Activated CD8-positive, alpha-beta T cell treated with anti-CD3 and anti-CD28 coated beads, Interleukin-2, amount 10 ng/mL, durations not matched to agents 7 days and 5 days (primary cell): ENCODE measurements at regions of chr6 and their contacts with region 1.

Region 1: DNA sequence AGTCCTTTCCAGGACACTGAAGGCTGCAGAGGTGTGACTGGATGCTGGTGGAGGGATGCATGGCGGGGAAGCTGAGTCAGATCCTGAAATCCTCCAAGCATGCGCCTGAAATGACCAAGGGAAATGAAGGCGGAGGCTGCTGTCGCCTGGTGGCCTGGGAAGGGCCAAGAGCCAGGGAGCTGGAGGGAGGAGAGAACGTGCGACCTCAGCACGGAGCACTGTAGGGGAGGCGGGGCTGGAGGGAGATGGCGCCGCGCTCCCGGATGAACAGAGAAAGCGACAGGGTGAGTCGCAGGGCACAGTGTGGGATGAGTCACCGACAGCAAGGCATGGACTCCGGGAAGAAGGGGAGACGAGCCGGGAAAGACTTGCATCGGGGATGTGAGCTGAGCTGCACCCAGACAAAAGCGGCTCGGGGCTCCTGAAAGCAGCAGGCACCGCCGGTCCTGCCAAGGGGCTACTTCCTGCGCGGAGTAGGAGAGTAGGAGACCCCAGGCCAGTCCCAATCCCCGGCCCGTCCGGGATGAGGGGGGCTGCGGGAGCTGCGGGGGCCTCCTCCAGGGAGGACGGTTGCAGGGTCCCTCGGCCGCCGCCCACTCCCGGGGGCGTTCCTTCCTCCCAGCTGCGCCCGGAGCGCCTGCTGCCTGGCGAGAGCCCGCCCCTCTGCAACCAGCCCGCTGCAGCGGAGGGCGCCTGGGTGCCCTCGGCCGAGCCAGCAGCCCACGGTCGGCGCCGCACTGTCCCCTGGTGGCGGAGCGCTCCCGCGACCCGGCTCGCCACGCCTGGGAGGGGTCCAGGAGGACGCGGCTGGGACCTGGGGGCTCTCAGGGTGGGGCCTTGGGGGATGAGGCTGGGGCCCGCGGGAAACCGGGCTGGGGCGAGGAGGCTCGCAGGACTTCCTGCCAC is 11.0 kb upstream of the NQO2 start:
- DNase-seq: peak; percentile 83
- ATAC-seq: peak; percentile 79
- H3K4me3 Mint-ChIP-seq: peak overlapping the region; percentile 87
- H3K27ac Mint-ChIP-seq: peak overlapping the region; percentile 96
- H3K4me1 Mint-ChIP-seq: peaks cover 25% of the 10 kb centered on the region
- H3K27me3 Mint-ChIP-seq: peaks cover 4% of the 10 kb centered on the region

Region 2: DNA sequence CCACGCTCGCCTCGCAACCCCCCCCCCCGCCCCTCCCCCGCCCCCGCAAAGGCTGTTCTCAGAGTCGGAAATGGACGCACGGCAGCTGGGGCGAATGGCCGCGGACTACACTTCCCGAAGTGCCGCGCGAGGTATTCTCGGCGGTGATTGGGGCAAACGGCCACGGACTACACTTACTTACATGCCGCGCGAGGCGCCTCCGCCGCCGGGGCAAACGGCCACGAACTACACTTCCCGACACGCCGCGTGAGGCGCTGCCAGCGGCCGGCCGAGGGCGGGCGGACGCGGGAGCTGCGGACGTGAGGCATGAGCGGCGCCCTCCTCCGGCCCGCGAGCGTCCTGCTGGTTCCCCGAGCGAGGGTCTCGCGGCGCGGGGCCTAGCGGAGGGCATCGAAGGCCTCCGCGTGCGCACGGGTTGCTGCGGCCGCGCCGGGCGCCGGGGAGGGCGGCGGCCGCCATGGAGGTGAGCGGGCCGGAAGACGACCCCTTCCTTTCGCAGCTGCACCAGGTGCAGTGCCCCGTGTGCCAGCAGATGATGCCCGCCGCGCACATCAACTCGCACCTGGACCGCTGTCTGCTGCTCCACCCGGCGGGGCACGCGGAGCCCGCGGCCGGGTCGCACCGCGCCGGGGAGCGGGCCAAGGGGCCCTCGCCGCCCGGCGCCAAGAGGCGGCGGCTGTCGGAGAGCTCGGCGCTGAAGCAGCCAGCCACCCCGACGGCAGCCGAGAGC is 223.3 kb before region 1 on chr6 and contains the start of gene WRNIP1:
- CTCF ChIA-PET with region 1: interaction called, 14 read pairs
- POLR2A ChIA-PET with region 1: interaction called, 3 read pairs
- DNase-seq: peak; percentile 98
- ATAC-seq: peak; percentile 91
- H3K4me3 Mint-ChIP-seq: peak within 1 kb of the TSS; percentile 92
- H3K27ac Mint-ChIP-seq: peak within 1 kb of the TSS; percentile 97
- H3K4me1 Mint-ChIP-seq: peaks cover 55% of the 10 kb centered on the region
- H3K27me3 Mint-ChIP-seq: no peaks in the 10 kb centered on the region
- total RNA-seq, gene WRNIP1: 48.2 to 49.6 TPM

Region 3: GRCh38 chr6:2848851-2849250 is 139.8 kb before region 1 on chr6:
- CTCF ChIA-PET with region 1: interaction called, 97 read pairs
- POLR2A ChIA-PET with region 1: interaction called, 29 read pairs
- DNase-seq: peak; percentile 81
- ATAC-seq: peak; percentile 72
- H3K4me3 Mint-ChIP-seq: peak overlapping the region; percentile 3
- H3K27ac Mint-ChIP-seq: peak overlapping the region; percentile 68
- H3K4me1 Mint-ChIP-seq: peaks cover 53% of the 10 kb centered on the region
- H3K27me3 Mint-ChIP-seq: no peaks in the 10 kb centered on the region

Region 4: GRCh38 chr6:2870056-2870674 is 118.5 kb before region 1 on chr6:
- CTCF ChIA-PET with region 1: no interaction called
- POLR2A ChIA-PET with region 1: no interaction called
- DNase-seq: no peak
- ATAC-seq: no peak
- H3K4me3 Mint-ChIP-seq: no peak overlapping the region
- H3K27ac Mint-ChIP-seq: no peak overlapping the region
- H3K4me1 Mint-ChIP-seq: peaks cover 47% of the 10 kb centered on the region
- H3K27me3 Mint-ChIP-seq: no peaks in the 10 kb centered on the region

Region 5: GRCh38 chr6:2900821-2901644 is 87.6 kb before region 1 on chr6:
- CTCF ChIA-PET with region 1: interaction called, 13 read pairs
- POLR2A ChIA-PET with region 1: interaction called, 6 read pairs
- DNase-seq: peak; percentile 21
- ATAC-seq: no peak
- H3K4me3 Mint-ChIP-seq: peak overlapping the region; percentile 94
- H3K27ac Mint-ChIP-seq: peak overlapping the region; percentile 62
- H3K4me1 Mint-ChIP-seq: peaks cover 53% of the 10 kb centered on the region
- H3K27me3 Mint-ChIP-seq: no peaks in the 10 kb centered on the region

Region 6: DNA sequence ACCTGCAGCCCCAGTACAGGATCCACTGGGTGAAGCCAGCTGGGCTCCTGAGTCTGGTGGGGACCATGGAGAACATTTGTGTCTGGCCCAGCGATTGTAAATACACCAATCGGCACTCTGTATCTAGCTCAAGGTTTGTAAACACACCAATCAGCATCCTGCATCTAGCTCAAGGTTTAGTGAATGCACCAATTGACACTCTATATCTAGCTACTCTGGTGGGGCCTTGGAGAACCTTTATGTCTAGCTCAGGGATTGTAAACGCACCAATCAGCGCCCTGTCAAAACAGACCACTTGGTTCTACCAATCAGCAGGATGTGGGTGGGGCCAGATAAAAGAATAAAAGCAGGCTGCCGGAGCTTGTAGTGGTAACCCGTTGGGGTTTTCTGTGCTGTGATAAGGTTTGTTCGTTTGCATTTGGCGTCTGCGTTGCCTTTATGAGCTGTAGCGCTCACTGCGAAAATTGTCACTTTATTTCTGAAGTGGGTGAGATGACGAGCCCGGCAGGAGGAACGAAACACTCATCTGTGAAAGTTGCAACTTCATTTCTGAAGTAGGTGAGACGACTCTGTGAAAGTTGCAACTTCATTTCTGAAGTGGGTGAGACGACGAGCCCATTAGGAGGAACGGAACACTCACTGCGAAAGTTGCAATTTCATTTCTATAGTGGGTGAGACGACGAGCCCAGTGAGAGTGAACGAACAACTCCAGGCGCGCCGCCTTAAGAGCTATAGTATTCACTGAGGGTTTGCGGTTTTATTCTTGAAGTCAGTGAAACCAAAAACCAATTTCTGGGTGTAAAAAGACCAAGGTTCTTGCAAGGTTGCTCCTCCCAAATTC is 48.4 kb before region 1 on chr6:
- CTCF ChIA-PET with region 1: interaction called, 63 read pairs
- POLR2A ChIA-PET with region 1: interaction called, 76 read pairs
- DNase-seq: peak; percentile 87
- ATAC-seq: peak; percentile 85
- H3K4me3 Mint-ChIP-seq: peak overlapping the region; percentile 74
- H3K27ac Mint-ChIP-seq: peak overlapping the region; percentile 94
- H3K4me1 Mint-ChIP-seq: peaks cover 68% of the 10 kb centered on the region
- H3K27me3 Mint-ChIP-seq: no peaks in the 10 kb centered on the region

Region 7: DNA sequence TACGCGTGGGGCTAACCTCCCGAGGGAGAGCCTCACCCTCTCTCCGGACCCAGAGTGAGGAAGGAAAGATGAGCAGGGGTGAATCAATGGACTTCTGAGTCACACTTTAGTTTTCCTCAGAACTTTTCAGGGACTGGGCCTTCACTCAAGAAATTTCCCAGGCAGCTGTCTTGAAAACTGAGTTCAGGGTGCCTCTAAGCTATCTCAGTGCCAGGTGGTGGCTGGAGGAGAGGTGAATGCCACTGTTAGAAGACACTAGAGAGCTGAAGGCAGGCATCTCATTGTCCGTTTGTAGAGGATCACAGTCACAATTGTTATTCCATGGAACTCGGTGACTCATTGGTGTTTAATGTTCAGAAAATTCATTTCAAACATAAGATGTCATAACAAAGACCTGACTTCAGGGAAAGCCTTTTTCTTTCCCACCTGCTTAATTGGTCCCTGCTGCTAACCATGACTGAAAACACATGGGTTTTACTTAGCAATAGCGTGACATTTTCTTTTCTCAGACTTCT is 12.1 kb before region 1 on chr6:
- CTCF ChIA-PET with region 1: interaction called, 19 read pairs
- POLR2A ChIA-PET with region 1: interaction called, 13 read pairs
- DNase-seq: no peak
- ATAC-seq: no peak
- H3K4me3 Mint-ChIP-seq: no peak overlapping the region
- H3K27ac Mint-ChIP-seq: no peak overlapping the region
- H3K4me1 Mint-ChIP-seq: peaks cover 21% of the 10 kb centered on the region
- H3K27me3 Mint-ChIP-seq: peaks cover 16% of the 10 kb centered on the region

Region 8: DNA sequence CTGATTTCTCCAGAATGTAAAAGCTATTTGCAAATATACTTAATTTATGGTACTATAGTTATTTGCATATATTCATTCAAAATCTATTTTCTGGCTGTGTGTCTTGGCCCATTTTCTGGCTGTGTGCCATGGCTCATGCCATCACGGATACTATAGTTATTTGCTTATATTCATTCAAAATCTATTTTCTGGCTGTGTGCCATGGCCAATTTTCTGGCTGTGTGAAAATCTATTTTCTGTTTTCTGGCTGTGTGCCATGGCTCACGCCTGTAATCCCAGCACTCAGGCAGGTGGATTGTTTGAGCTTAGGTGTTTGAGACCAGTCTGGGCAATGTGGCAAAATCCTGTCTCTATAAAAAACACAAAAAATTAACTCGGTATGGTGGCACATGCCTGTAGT is 50.7 kb after region 1 on chr6:
- CTCF ChIA-PET with region 1: no interaction called
- POLR2A ChIA-PET with region 1: no interaction called
- DNase-seq: no peak
- ATAC-seq: no peak
- H3K4me3 Mint-ChIP-seq: no peak overlapping the region
- H3K27ac Mint-ChIP-seq: no peak overlapping the region
- H3K4me1 Mint-ChIP-seq: no peaks in the 10 kb centered on the region
- H3K27me3 Mint-ChIP-seq: peaks cover 21% of the 10 kb centered on the region

Region 9: DNA sequence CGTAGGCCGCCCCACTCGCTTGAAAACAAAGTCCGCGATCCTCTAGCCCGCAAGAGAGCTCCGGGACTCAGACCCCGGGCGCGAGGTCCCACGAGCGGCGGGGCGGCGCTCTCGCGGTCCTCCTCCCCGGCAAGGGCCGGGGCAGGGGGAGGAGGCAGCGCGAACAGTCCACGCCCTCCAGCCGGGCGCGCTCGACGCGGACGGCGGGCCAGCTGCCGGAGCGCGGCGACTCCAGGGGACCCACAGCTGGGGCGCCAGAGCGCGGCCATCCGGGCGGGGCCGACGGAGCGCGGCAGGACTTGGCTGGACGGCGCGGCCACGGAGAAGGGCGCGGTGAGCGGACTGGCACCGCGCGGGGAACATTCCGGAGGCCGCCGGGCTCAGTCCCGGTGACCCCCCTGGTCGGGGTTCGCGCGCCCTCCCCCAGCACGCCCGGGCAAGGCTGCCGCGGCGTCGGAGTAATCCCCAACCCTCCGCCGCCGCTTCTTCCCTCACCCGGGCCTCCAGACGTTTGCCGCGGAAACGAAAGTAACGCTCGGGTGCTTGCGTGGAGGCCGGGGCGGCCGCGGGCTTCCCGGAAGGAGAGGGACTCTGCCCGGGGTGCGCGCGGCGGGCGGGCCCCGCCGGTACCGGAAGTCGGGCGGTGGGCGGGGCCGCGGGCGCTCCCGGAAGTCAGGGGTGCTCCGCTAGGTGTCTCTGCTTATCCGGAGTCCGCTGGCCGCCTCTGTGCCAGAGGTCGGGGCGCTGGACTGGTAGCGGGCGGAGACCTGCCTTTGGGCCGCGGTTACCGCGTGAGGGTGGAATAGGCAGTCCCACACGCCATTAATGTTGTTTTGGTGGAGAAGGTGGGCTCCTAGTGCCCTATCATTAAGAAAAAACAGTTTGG is 79.9 kb after region 1 on chr6 and contains the start of gene RIPK1:
- CTCF ChIA-PET with region 1: interaction called, 10 read pairs
- POLR2A ChIA-PET with region 1: interaction called, 35 read pairs
- DNase-seq: peak; percentile 95
- ATAC-seq: peak; percentile 82
- H3K4me3 Mint-ChIP-seq: peak within 1 kb of the TSS; percentile 96
- H3K27ac Mint-ChIP-seq: peak within 1 kb of the TSS; percentile 97
- H3K4me1 Mint-ChIP-seq: peaks cover 67% of the 10 kb centered on the region
- H3K27me3 Mint-ChIP-seq: no peaks in the 10 kb centered on the region
- total RNA-seq, gene RIPK1: 28.0 to 28.1 TPM

Region 10: DNA sequence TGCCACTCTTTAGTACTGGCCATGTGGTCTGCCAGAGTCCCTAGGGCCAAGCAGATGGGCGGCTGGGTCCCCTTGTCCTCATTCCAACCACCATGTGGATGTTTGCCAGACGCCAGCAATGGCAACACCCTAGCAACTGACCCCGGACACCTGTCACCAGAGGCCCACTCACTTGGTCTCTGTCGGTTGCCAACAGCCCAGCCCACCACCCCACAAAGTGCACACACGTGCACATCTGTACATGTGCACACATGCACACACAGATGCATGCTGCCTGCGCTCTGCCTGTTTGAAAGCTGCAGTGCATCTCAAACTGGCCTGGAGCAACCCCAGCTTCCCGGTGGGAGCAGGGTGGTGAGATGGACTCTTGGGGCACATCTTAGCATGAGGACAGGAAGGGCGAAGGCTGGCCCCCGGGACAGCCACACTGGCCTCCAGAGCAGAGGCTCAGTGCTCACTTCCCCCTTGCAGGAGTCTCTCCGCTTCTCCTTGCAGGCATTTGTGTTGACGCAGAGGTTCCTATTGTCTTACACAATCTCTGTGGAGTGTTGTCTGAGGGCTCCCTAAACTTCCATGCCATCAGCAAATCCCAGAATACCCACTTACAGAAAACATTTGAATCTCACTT is 324.0 kb after region 1 on chr6:
- CTCF ChIA-PET with region 1: no interaction called
- POLR2A ChIA-PET with region 1: no interaction called
- DNase-seq: no peak
- ATAC-seq: no peak
- H3K4me3 Mint-ChIP-seq: no peak overlapping the region
- H3K27ac Mint-ChIP-seq: no peak overlapping the region
- H3K4me1 Mint-ChIP-seq: peaks cover 4% of the 10 kb centered on the region
- H3K27me3 Mint-ChIP-seq: peaks cover 6% of the 10 kb centered on the region

Region 11: GRCh38 chr6:3500262-3501016 is 511.8 kb after region 1 on chr6:
- CTCF ChIA-PET with region 1: no interaction called
- POLR2A ChIA-PET with region 1: no interaction called
- DNase-seq: no peak
- ATAC-seq: no peak
- H3K4me3 Mint-ChIP-seq: no peak overlapping the region
- H3K27ac Mint-ChIP-seq: no peak overlapping the region
- H3K4me1 Mint-ChIP-seq: no peaks in the 10 kb centered on the region
- H3K27me3 Mint-ChIP-seq: peaks cover 16% of the 10 kb centered on the region